Colonic mucosa (tissue), 4 donors: ENCODE measurements at regions of chr9 and their contacts with region 1.

Region 1: GRCh38 chr9:93159601-93160471 is 24.1 kb upstream of the WNK2 start:
- DNase-seq: peak; percentile 90
- H3K4me3 ChIP-seq: no peak overlapping the region
- H3K27ac ChIP-seq: no peak overlapping the region
- H3K4me1 ChIP-seq: no peaks in the 10 kb centered on the region
- H3K27me3 ChIP-seq: no peaks in the 10 kb centered on the region
- CTCF ChIP-seq: peak; percentile 94

Region 2: GRCh38 chr9:93302551-93303257 is 142.9 kb after region 1 on chr9:
- intact Hi-C with region 1: loop called (anchors 2 kb)
- DNase-seq: peak; percentile 70
- H3K4me3 ChIP-seq: no peak overlapping the region
- H3K27ac ChIP-seq: no peak overlapping the region
- H3K4me1 ChIP-seq: peaks cover 26% of the 10 kb centered on the region
- H3K27me3 ChIP-seq: no peaks in the 10 kb centered on the region
- CTCF ChIP-seq: peak; percentile 51

Region 3: GRCh38 chr9:93549611-93550010 is 389.8 kb after region 1 on chr9:
- intact Hi-C with region 1: loop called (anchors 10 kb)
- DNase-seq: no peak
- H3K4me3 ChIP-seq: no peak overlapping the region
- H3K27ac ChIP-seq: no peak overlapping the region
- H3K4me1 ChIP-seq: peaks cover 2% of the 10 kb centered on the region
- H3K27me3 ChIP-seq: no peaks in the 10 kb centered on the region
- CTCF ChIP-seq: no peak